AG04449 (cell line): ENCODE measurements at regions of chr4 and their contacts with region 1.

Region 1: DNA sequence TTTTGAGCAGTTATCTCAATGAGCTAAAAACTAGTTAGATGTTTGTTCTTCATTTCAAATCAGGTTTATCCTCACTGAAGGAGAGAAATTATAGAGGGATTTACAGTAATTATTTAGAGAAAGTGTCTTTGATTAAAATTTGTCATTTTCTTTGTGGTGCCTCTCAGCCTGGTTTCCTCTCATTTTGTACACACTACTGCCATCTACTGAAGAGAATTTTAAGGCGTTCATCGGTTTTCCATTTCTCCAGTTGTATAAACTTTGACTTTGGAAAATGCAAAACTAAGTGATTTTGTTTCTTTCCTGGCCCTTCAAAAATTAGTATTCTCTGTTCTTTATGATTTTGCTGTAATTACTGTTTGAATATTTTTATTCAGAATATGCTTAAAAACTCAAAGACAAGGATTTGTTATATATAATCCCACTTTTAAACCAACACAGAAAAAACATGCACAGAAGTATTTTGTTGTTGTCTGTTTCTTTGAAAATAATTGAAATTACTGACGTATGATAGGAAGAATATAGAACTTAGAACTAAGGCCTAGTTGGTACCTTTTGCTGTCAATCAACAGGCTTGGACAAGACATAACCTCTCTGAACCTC is 34.4 kb upstream of the ANXA3 start:
- DNase-seq: no peak
- H3K4me3 ChIP-seq: no peak overlapping the region
- CTCF ChIP-seq: peak; percentile 52

Region 2: GRCh38 chr4:77959566-77960338 is 557.4 kb before region 1 on chr4:
- CTCF ChIA-PET with region 1: interaction called, 48 read pairs
- POLR2A ChIA-PET with region 1: no interaction called
- DNase-seq: peak; percentile 5
- H3K4me3 ChIP-seq: no peak overlapping the region
- CTCF ChIP-seq: peak; percentile 46

Region 3: DNA sequence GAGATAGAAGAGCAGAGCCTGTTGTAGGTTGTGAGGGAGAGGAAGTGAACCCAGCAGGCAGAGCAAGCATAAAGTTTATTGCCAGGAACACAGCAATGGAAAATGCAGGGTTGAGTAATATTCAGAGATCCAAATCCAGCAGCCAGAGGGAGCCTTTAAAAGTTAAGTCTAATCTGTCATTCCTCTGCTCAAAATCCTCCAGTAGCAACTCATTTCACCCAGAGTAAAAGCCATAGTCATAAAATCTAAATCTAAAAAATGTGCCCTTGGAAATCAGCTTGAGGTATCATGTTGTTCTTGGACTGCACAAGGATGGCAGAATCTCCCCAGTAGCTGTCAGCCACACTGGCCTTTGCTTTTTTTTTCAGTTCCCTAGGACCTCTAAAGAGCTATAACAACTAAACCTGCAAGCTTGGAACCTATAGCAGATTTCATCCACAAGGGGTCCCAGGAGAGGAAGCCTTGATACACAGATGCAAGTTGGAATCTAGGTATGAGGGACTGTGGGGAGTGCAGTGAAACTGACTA is 522.9 kb before region 1 on chr4:
- CTCF ChIA-PET with region 1: interaction called, 48 read pairs
- POLR2A ChIA-PET with region 1: no interaction called
- DNase-seq: peak; percentile 36
- H3K4me3 ChIP-seq: no peak overlapping the region
- CTCF ChIP-seq: peak; percentile 73

Region 4: DNA sequence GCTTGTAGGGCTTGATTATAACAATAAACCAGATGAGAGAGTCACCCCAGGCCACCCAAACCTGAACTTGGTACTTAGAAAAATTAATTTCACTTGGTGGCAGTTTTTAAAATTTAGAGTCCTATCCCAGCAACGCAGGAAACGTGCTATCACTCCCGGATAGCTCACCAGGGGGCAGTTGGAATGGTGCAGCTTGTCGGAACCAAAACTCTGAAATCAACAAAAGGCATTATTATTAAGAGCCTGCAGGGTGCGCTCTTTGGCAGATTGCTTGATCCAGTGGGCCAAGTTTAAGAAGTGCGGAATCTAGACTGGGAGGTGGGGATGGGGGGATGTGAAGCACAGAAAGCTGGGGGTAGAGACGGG is 457.6 kb before region 1 on chr4:
- CTCF ChIA-PET with region 1: interaction called, 11 read pairs
- POLR2A ChIA-PET with region 1: no interaction called
- DNase-seq: peak; percentile 4
- H3K4me3 ChIP-seq: peak overlapping the region; percentile 63; the same call in 1 of the 2 replicates
- CTCF ChIP-seq: peak; percentile 48

Region 5: DNA sequence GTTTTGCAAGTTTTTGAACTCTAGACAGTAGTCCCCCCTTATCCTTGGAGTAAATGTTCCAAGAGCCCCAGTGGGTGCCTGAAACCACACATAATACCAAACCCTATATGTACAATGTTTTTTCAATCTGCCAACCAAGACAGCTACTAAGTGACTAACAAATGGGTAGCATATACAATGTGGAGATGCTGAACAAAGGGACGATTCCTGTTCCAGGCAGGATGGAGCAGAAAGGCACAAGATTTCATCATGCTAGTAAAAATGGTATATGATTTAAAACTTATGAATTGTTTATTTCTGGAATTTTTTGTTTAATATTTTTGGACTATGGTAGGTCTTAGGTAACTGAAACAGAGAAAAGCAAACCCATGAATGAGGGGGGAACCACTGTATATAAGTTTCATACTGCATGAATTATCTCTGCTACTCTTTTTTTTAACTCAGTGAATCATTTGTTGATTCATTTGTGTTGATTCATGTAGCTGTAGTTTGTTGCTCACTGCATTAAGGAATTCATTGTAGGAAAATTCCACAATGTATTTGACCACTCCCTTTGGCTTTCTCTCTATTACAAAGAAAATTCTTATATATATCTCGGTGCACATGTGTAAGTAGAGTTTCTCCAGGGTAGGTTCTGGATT is 12.5 kb after region 1 on chr4:
- CTCF ChIA-PET with region 1: interaction called, 13 read pairs
- POLR2A ChIA-PET with region 1: no interaction called
- DNase-seq: no peak
- H3K4me3 ChIP-seq: no peak overlapping the region
- CTCF ChIP-seq: no peak